ENCODE measurements at regions of chr6 and their contacts with region 1.

Region 1: GRCh38 chr6:147285087-147285855 is 81.1 kb downstream of the STXBP5 start:
- DNase-seq: no peak
- ATAC-seq: peak; percentile 51

Region 2: DNA sequence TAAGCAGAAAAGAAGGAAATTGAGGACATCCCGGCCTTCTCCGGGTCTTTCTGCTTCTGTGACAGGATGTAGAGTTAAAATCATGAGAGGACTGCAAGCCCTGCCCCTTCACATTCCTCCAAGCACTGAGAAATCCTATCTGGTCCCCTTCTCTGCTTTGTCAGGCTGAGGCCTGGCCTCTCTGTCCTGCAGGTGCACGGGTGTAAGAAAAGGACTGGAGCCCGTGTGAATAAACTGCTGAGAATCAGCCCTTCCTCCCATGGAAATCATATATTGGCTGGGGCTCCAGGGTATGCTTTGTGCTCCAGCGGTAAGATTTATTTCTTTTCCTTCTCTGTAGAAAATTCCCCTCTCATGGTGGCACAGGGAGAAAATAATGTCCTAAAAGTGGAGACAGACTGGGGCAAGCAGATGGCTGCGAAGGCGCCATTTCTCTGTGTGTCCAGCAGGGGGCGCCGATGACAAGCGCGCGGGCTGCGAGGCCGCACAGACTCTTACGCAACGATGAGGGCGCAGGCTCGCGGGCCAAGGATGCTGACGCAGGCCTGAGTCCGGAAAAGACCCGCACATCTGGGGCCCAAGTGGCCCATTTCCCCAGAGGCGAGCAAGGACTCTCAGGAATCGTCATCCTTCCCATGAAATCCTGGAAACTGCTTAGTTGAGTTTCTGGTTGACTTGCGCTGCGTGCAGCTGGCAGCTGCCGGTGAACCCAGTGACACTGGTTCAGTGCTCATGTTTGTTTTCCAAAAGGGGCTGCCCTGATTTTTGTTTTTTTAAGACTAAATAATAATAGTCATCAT is 427.9 kb before region 1 on chr6:
- intact Hi-C with region 1: loop called (anchors 5 kb)
- DNase-seq: peak; percentile 91
- ATAC-seq: peak; percentile 98

Region 3: DNA sequence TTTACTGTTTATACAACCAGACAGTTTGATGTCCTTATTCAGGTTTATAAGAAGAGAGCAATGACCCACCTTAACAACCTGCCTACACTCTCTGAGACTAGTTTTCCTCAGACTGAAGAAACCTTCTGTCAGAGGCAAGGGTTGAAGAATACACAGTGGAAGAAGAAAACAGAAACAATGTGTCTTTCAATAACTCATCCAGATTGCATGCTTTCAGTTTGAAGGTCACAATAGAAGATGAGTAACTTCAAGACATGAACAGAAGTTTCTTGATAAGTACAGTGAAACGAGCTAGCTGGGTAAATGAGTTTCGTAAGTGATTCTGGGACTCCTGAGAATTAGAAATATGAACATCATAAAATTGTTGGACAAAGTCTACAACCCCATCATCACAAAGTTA is 60.6 kb after region 1 on chr6:
- intact Hi-C with region 1: no loop called
- DNase-seq: no peak
- ATAC-seq: no peak